ENCODE measurements at regions of chr3 and their contacts with region 1.

Region 1: DNA sequence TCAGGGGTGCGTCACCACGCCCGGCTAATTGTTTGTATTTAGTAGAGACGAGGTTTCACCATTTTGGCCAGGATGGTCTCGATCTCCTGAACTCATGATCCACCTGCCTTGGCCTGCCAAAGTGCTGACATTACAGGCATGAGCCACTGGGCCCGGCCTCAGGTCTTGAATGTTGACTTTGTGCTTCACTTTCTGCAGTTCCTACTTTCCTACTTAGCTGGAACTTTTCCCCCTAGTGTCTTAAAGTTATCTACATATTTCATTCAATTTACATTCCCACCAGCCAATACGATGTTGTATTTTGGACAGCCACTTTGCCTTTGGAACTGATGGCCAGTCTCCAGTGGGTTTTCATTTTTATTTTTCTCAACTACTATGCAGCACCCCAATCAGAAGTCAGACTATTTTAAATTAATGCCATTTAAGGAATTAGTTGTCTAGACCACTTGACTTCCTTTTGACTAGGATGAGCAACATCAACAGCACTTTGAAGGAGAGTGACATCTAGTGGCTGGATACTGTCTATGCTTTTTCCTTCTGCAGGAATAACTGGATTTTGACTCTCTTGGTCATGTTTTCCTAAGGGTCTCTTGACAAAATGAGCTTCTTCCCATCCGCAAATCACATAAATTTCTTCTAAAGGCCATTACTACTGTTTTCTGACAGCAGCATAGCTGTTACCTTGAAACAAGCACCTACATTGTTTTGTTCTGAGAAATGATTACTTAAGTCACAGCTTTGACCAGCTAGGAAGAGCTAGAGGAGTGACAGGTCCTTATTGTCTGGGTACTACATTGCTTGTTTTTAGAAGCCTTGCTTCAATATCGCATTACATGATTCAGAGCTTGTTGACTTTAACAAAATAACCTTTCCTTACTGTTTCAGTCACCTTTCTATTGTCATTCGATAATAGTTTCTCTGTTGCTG is 140.2 kb downstream of the ITPR1 start:
- H3K4me3 Mint-ChIP-seq: no peak overlapping the region
- H3K27ac Mint-ChIP-seq: no peak overlapping the region
- H3K4me1 Mint-ChIP-seq: peaks cover 22% of the 10 kb centered on the region
- H3K27me3 Mint-ChIP-seq: no peaks in the 10 kb centered on the region

Region 2: DNA sequence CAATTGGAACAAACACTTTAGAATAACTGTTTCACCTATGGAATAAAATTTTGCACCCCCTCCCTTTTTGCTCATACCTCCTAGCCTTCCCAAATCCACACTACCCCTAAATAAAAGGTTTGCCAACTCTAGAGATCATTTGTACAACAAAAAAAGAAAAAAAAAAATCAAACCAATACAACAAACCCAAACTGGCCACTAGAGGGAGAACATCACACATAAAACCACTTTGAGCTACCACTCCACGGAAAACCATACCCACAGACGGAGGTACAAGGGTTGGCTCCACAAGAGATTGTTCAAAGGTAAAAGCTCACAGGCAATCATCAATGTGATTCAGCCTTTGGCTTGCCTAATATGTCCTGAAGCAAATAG is 282.6 kb before region 1 on chr3:
- intact Hi-C with region 1: loop called (anchors 1 kb)
- H3K4me3 Mint-ChIP-seq: no peak overlapping the region
- H3K27ac Mint-ChIP-seq: peak overlapping the region; percentile 40
- H3K4me1 Mint-ChIP-seq: peaks cover 28% of the 10 kb centered on the region
- H3K27me3 Mint-ChIP-seq: no peaks in the 10 kb centered on the region

Region 3: GRCh38 chr3:5390221-5390620 is 756.9 kb after region 1 on chr3:
- intact Hi-C with region 1: no loop called
- H3K4me3 Mint-ChIP-seq: no peak overlapping the region
- H3K27ac Mint-ChIP-seq: no peak overlapping the region
- H3K4me1 Mint-ChIP-seq: peaks cover 20% of the 10 kb centered on the region
- H3K27me3 Mint-ChIP-seq: no peaks in the 10 kb centered on the region